Common myeloid progenitor, CD34-positive (primary cell): ENCODE measurements at regions of chr14 and their contacts with region 1.

Region 1: DNA sequence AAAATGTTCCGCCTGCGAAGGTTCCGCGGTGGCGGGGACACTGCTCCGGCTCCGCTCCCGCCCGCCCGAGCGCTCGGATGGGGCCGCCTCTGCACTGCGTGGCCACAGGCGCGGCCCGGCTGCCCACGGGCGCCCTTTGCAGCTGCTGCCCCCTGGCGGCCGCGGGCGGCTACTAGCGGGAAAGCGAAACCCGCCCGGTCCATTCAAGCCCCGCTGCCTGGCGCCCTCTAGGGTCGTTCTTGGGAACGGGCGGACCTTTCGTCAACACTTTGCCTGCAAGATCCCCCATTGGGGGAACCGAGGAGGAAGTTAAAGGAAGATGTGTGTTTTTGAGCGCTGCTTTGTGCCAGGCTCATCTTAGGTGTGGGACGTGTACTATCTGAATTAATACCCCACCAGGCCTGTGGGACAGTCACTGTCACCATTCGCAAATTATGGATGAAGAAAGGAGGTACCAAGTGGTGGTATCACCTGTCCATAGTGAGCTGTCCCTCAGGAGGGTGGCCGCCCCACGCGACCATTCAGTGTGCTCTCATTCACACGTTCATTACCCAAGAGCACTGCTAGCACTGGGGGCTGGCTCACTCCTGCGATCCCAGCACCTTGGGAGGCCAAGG is 19.4 kb downstream of the GPR132 start:
- DNase-seq: peak; percentile 90 to 95 (median 93)
- H3K4me3 ChIP-seq: peak overlapping the region in 3 of 7 experiments; percentile 32 to 48 (median 44)
- H3K27ac ChIP-seq: no peak overlapping the region
- H3K4me1 ChIP-seq: peaks cover 0 to 20% (median 13%) of the 10 kb centered on the region in 4 experiments
- H3K27me3 ChIP-seq: peaks cover 0 to 4% (median 0%) of the 10 kb centered on the region in 5 experiments

Region 2: DNA sequence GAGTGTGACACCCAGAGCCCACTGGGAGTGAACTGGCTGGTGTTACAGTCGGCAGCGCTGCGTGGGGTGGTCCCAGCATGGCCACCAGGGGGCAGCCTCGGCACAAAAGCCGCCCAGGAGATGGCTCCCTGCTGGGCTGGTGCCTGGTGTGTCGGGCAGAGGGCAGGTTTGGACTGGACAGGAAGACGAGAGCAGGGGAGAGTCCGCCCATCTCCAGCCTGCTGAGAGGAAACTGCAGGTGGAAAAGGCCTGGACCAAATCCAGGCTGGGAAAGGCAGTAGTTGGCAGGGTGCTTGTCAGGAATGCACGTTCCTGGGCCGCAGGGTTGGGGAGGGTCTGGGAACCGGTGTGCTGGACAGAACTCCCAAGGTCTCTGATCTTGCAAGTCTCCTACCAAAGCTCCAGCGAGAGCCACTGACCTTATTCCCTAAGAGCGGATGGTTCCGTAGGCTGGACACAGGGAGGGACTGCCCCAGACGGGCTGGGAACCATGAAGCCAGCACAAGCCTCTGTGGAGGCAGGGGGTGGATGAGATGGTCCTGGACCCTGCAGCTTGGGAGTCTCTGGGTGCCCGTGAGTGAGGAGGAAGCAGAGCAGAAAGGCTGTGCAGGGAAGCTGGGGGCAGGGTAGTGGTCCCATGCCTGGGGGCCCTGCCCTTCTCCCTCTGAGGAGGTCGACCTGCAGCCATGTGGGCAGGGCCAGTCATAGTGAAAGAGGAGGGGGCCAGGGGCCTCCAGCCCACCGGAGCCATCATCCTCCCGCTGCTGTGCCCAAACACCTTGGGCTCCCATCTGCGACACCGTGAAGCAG is 69.4 kb before region 1 on chr14:
- CTCF ChIA-PET with region 1: interaction called, 100 read pairs
- POLR2A ChIA-PET with region 1: no interaction called
- DNase-seq: peak; percentile 70 to 84 (median 79)
- H3K4me3 ChIP-seq: no peak overlapping the region
- H3K27ac ChIP-seq: no peak overlapping the region
- H3K4me1 ChIP-seq: peaks cover 0 to 16% (median 13%) of the 10 kb centered on the region in 4 experiments
- H3K27me3 ChIP-seq: peaks cover 0 to 28% (median 18%) of the 10 kb centered on the region in 5 experiments

Region 3: DNA sequence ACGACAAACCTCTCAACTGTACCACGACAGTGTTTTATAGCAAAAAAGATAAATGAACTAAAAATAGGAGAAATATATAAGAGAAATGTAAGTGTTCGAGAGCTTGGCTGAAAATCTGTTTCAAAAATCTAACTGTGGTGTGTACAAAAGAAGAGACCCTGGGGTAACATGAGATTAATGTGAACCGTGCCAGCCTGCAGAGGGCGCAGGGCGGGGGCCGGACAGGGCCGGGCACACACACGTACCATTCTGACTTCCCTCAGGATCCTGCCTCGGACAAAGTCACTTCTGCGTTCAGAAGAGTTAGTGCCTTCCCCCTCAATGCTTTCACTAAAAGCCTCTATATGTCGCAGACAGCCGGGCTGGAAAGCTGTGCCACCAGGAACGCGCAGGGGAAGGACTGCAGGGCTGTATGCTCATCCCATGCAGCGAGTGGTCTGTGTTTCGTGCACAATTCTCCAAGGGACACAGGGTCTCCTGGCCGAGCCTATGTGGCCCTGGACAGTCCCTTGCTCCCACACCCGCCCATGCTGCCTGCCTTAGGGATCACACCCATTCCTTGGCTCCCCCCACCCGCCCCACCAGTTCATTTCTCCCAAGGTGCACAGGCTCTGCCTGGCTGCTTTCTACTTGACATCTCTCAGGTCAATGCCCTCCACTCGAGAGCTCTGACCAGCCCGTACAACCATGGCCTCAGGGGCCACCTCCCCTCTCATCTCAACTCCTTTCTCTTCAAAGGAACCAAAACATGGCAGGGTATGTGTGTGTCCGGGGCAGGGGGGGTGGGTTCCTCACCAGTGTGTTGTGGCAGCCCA is 33.4 kb before region 1 on chr14:
- CTCF ChIA-PET with region 1: interaction called, 44 read pairs
- POLR2A ChIA-PET with region 1: no interaction called
- DNase-seq: peak in 2 of 3 donors; percentile 23 to 39
- H3K4me3 ChIP-seq: peak overlapping the region in 1 of 7 experiments; percentile 11
- H3K27ac ChIP-seq: peak overlapping the region in 1 of 2 experiments; percentile 7
- H3K4me1 ChIP-seq: peaks cover 0 to 31% (median 14%) of the 10 kb centered on the region in 4 experiments
- H3K27me3 ChIP-seq: no peaks in the 10 kb centered on the region

Region 4: DNA sequence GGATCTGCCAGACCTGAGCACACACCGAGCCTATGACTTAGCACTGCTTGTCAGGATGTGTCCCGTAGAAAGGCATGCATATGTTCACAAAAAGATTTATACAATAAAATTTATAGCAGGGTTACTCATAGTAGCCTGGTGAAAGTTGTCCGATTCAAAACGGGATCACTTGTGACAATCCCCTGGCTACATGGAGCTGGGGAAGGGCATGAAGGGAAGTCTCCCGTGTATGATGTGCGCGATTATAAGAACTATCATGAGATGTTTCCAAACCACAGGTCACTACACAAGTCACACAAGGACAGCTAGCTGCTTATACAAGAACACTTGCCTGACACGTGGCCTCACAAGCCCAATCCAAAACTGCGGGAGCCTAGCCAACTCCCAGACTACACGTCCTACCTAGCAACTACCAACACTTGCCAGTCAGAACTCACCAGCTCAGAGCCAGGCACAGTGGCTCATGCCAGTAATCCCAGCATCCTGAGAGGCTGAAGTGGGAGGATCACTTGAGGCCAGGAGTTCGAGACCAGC is 17.5 kb before region 1 on chr14:
- CTCF ChIA-PET with region 1: interaction called, 10 read pairs
- POLR2A ChIA-PET with region 1: no interaction called
- DNase-seq: no peak
- H3K4me3 ChIP-seq: no peak overlapping the region
- H3K27ac ChIP-seq: no peak overlapping the region
- H3K4me1 ChIP-seq: peaks cover 0 to 8% (median under 1%) of the 10 kb centered on the region in 4 experiments
- H3K27me3 ChIP-seq: peaks cover 0 to 2% (median 0%) of the 10 kb centered on the region in 5 experiments

Region 5: DNA sequence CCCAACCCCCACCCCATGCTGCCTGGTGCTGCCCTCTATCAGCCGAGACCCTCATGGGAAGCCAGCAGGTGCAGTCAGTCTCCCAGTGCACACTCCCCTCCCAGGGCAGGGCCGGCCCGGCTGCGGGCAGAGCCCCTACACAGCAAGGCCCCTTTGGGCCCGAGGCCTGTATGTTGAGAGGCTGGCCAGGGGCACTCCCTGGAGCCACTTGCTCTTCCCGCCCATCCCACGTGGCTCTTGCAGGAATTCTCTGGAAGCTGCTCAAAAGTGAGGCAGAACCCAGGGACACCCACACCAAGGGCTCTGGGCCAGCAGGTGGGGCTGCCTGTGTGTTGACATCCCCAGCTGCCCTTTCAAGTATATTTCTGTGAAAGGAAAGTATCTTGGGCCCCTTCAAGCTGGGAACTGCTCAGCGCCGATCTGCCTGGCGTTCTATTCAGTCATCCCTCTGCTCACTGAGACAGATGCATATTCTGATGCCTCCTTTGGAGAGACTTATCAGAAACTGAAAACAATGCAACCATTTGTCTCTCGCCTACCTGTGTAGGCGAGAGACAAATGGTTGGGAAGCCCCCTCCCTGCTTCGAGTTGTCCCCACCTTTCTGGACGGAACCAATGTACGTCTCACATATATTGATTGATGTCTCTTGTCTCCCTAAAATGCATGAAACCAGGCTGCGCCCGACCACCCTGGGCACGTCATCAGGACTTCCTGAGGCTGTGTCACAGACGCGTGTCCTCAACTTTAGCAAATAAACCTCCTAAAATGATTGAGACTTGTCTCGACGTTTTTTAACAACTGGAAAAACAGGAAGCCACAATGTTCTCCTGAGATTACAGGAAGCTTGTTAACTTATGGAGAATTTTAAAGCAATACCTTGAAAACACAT is 13.5 kb after region 1 on chr14:
- CTCF ChIA-PET with region 1: interaction called, 33 read pairs
- POLR2A ChIA-PET with region 1: interaction called, 9 read pairs
- DNase-seq: peak in 2 of 3 donors; percentile 53 to 61
- H3K4me3 ChIP-seq: peak overlapping the region in 1 of 7 experiments; percentile 11
- H3K27ac ChIP-seq: peak overlapping the region in 1 of 2 experiments; percentile 40
- H3K4me1 ChIP-seq: peaks cover 14 to 59% (median 55%) of the 10 kb centered on the region in 4 experiments
- H3K27me3 ChIP-seq: no peaks in the 10 kb centered on the region

Region 6: DNA sequence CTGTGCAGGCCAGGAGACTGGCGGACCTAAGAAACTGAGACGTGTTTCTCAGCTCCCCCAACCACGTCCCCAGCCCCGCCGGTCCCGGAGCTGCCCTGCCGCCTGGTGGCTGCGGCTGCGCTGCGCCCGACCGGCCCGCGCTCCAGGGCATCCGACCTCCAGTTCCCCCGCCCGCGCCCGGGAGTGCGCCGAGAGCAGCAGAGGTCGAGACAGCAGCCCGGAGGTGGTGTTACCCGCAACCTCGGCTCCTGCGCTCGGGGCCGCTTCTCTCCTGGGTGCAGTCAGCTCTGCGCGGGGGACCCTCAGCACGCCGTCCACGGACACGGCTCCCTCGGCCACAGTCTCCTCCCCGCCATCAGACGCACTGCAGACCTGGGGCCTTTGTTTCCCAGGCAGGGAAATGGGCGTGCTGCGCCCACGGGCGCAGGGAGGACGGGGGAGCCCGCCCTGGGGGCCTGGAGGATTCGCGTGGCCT is 41.1 kb after region 1 on chr14:
- CTCF ChIA-PET with region 1: interaction called, 24 read pairs
- POLR2A ChIA-PET with region 1: interaction called, 4 read pairs
- DNase-seq: peak; percentile 76 to 84 (median 83)
- H3K4me3 ChIP-seq: peak overlapping the region in 4 of 7 experiments; percentile 33 to 63 (median 50)
- H3K27ac ChIP-seq: no peak overlapping the region
- H3K4me1 ChIP-seq: peaks cover 0 to 23% (median 15%) of the 10 kb centered on the region in 4 experiments
- H3K27me3 ChIP-seq: peaks cover 0 to 29% (median 19%) of the 10 kb centered on the region in 5 experiments